MCF 10A (cell line): ENCODE measurements at regions of chrX and their contacts with region 1.

Region 1: DNA sequence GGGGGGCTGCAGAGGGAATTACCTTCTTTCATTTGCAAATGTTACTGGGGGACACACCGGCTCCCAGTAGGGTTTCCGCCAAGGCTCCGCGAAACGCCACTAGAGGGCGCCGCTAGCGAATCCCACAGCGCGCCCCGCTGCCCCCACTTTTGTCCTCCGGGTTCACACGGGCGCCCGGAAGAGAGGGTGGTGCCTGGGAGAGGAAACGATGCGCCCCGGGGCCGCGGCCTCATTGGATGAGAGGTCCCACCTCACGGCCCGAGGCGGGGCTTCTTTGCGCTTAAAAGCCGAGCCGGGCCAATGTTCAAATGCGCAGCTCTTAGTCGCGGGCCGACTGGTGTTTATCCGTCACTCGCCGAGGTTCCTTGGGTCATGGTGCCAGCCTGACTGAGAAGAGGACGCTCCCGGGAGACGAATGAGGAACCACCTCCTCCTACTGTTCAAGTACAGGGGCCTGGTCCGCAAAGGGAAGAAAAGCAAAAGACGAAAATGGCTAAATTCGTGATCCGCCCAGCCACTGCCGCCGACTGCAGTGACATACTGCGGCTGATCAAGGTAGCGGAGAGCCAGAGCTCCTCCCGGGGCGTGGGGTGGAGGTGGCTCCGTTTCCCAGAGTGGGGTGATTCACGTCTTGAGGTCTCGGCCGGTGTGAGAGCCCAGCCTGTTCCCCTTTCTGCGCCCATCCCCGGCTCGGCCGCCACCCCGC is at the start of gene SAT1:
- DNase-seq: peak; percentile 95
- H3K4me3 Mint-ChIP-seq: peak within 1 kb of the TSS; percentile 76
- H3K27ac Mint-ChIP-seq: peak within 1 kb of the TSS; percentile 80
- H3K4me1 Mint-ChIP-seq: peaks cover 23% of the 10 kb centered on the region
- H3K27me3 Mint-ChIP-seq: no peaks in the 10 kb centered on the region
- CTCF ChIP-seq: peak; percentile 56
- total RNA-seq, gene SAT1: 582 and 687 TPM in 2 replicates

Region 2: GRCh38 chrX:23667239-23668177 is 115.5 kb before region 1 on chrX and contains the start of gene PRDX4:
- CTCF ChIA-PET with region 1: no interaction called
- POLR2A ChIA-PET with region 1: interaction called, 11 read pairs
- intact Hi-C with region 1: no loop called
- DNase-seq: peak; percentile 83
- H3K4me3 Mint-ChIP-seq: peak within 1 kb of the TSS; percentile 79
- H3K27ac Mint-ChIP-seq: peak within 1 kb of the TSS; percentile 43
- H3K4me1 Mint-ChIP-seq: peaks cover 4% of the 10 kb centered on the region
- H3K27me3 Mint-ChIP-seq: peaks cover 46% of the 10 kb centered on the region
- CTCF ChIP-seq: no peak
- total RNA-seq, gene PRDX4: 134 and 157 TPM in 2 replicates

Region 3: GRCh38 chrX:23742697-23743622 is 40.1 kb before region 1 on chrX and contains the start of gene ACOT9:
- CTCF ChIA-PET with region 1: interaction called, 3 read pairs
- POLR2A ChIA-PET with region 1: interaction called, 49 read pairs
- intact Hi-C with region 1: loop called (anchors 1 kb)
- DNase-seq: peak; percentile 94
- H3K4me3 Mint-ChIP-seq: peak within 1 kb of the TSS; percentile 73
- H3K27ac Mint-ChIP-seq: peak within 1 kb of the TSS; percentile 77
- H3K4me1 Mint-ChIP-seq: peaks cover 13% of the 10 kb centered on the region
- H3K27me3 Mint-ChIP-seq: no peaks in the 10 kb centered on the region
- CTCF ChIP-seq: no peak
- total RNA-seq, gene ACOT9: 71.9 and 83.9 TPM in 2 replicates

Region 4: DNA sequence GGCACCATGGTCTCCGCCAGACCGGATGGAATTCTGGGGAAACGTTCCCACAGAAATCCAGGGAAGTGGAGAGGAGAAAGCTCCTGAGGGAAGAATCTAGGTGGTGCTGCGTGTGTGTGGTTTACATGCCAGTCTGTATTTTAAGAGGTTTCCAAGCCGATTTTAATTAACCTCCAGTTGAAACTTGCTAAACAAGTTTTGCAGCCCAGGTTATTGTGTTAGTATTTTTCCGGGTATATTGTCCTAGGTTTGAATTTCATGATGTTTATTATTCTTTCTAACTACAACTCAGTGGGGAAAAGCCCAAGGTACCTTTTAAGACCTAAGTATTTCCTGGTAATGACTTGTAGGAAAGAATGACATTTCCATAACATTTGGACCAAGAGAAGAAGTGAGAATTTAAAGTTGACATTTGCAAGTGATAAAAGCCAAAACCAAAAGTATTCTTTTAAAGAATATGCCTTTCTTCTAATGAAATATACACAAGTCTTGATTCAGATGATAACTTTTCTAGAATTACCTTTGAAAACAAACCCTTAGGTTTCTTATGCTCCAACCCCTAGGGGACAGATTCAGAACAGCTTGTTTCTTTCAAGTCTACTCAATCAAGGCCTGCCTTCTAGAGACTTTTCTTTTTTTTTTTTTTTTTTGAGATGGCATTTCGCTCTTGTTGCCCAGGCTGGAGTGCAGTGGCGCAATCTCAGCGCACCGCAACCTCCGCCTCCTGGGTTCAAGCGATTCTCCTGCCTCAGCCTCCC is 14.5 kb after region 1 on chrX:
- CTCF ChIA-PET with region 1: interaction called, 11 read pairs
- POLR2A ChIA-PET with region 1: interaction called, 111 read pairs
- intact Hi-C with region 1: no loop called
- DNase-seq: no peak
- H3K4me3 Mint-ChIP-seq: no peak overlapping the region
- H3K27ac Mint-ChIP-seq: no peak overlapping the region
- H3K4me1 Mint-ChIP-seq: no peaks in the 10 kb centered on the region
- H3K27me3 Mint-ChIP-seq: no peaks in the 10 kb centered on the region
- CTCF ChIP-seq: no peak

Region 5: DNA sequence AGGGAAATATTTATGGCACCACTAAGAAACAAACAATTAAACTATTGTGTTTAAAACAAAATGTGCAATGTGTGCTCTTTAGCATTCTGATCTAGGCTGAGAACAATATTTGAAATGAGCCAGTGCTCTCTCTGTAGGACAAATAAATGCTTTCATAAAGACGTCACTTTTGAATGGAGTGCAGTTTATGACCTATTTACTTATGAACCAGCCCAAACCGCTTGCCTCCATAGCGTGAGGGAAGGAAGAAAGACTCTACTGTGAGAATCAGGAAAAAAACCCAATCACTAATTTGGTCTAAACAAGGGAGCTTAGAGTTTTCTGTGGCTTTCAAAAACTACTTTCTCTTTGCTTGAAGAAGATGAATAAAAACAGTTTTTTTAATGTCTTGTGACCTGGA is 39.4 kb after region 1 on chrX:
- CTCF ChIA-PET with region 1: interaction called, 4 read pairs
- POLR2A ChIA-PET with region 1: interaction called, 19 read pairs
- intact Hi-C with region 1: loop called (anchors 1 kb)
- DNase-seq: no peak
- H3K4me3 Mint-ChIP-seq: no peak overlapping the region
- H3K27ac Mint-ChIP-seq: no peak overlapping the region
- H3K4me1 Mint-ChIP-seq: peaks cover 6% of the 10 kb centered on the region
- H3K27me3 Mint-ChIP-seq: peaks cover 25% of the 10 kb centered on the region
- CTCF ChIP-seq: no peak

Region 6: GRCh38 chrX:23888887-23889501 is 106.0 kb after region 1 on chrX:
- CTCF ChIA-PET with region 1: interaction called, 5 read pairs
- POLR2A ChIA-PET with region 1: interaction called, 13 read pairs
- intact Hi-C with region 1: loop called (anchors 5 kb)
- DNase-seq: no peak
- H3K4me3 Mint-ChIP-seq: no peak overlapping the region
- H3K27ac Mint-ChIP-seq: peak overlapping the region; percentile 59
- H3K4me1 Mint-ChIP-seq: peaks cover 14% of the 10 kb centered on the region
- H3K27me3 Mint-ChIP-seq: no peaks in the 10 kb centered on the region
- CTCF ChIP-seq: no peak

Region 7: GRCh38 chrX:24054182-24055042 is 271.4 kb after region 1 on chrX and contains the start of gene EIF2S3:
- CTCF ChIA-PET with region 1: interaction called, 6 read pairs
- POLR2A ChIA-PET with region 1: interaction called, 31 read pairs
- intact Hi-C with region 1: no loop called
- DNase-seq: peak; percentile 98
- H3K4me3 Mint-ChIP-seq: no peak within 1 kb of the TSS
- H3K27ac Mint-ChIP-seq: peak within 1 kb of the TSS; percentile 99
- H3K4me1 Mint-ChIP-seq: no peaks in the 10 kb centered on the region
- H3K27me3 Mint-ChIP-seq: peaks cover 10% of the 10 kb centered on the region
- CTCF ChIP-seq: peak; percentile 50
- total RNA-seq, gene EIF2S3: 354 and 391 TPM in 2 replicates